ENCODE measurements at regions of chr2 and their contacts with region 1.

Region 1: DNA sequence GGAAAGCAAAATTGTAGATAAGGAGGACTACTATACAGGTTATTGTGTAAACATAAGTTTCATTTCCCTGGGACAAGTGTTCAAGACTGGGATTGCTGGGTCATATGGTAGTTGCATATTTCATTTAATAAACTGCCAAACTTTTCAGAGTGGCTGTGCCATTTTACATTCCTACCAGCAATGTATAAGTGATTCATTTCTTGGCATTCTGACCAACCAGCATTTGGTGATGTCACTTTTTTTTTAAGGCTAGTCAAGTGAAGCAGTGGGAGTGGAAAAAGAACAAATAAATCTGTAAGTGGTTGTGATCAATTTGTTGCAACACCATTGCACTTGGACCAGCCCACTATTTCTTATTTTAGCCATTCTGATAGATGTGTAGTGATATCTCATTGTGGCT is 5.2 kb upstream of the CHCHD5 start:
- DNase-seq: no peak
- ATAC-seq: no peak
- H3K4me3 ChIP-seq: no peak overlapping the region
- H3K27ac ChIP-seq: no peak overlapping the region
- H3K4me1 ChIP-seq: peaks cover 10 to 18% of the 10 kb centered on the region in 2 experiments
- H3K27me3 ChIP-seq: no peaks in the 10 kb centered on the region
- CTCF ChIP-seq: no peak
- POLR2A ChIP-seq: no peak
- RAD21 ChIP-seq: no peak

Region 2: DNA sequence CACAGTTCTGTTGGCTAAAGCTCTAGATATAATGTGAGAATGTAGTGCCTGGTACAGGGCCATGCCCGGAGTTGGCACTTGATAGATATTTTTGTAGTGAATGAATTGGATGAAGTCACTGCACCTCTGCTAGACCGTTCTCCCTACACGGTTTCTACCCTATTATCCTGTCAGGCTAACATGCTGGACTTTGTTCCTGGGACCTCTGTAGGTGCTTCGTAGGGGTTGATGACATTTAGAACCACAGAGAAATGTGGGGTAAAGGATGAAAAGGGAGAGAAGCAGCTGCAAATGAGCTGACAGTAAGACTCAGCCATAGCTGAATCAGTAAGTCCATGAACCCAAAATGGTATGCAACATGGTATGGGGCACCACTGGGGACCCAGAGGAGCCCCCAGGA is 445.1 kb before region 1 on chr2:
- CTCF ChIA-PET with region 1: no interaction called
- POLR2A ChIA-PET with region 1: no interaction called
- RAD21 ChIA-PET with region 1: no interaction called
- intact Hi-C with region 1: loop called (anchors 5 kb)
- DNase-seq: no peak
- ATAC-seq: no peak
- H3K4me3 ChIP-seq: no peak overlapping the region
- H3K27ac ChIP-seq: no peak overlapping the region
- H3K4me1 ChIP-seq: no peaks in the 10 kb centered on the region
- H3K27me3 ChIP-seq: no peaks in the 10 kb centered on the region
- CTCF ChIP-seq: no peak
- POLR2A ChIP-seq: no peak
- RAD21 ChIP-seq: no peak